ENCODE measurements at regions of chr1 and their contacts with region 1.

Region 1: GRCh38 chr1:39538588-39539465 is 37.8 kb downstream of the PABPC4 start:
- DNase-seq: peak; percentile 27
- ATAC-seq: peak; percentile 100
- H3K4me3 ChIP-seq: no peak overlapping the region
- H3K27ac ChIP-seq: no peak overlapping the region
- H3K4me1 ChIP-seq: peaks cover 10% of the 10 kb centered on the region
- H3K27me3 ChIP-seq: no peaks in the 10 kb centered on the region
- CTCF ChIP-seq: peak; percentile 89 to 91 (median 90)
- EP300 ChIP-seq: no peak
- POLR2A ChIP-seq: no peak
- RAD21 ChIP-seq: peak; percentile 93

Region 2: DNA sequence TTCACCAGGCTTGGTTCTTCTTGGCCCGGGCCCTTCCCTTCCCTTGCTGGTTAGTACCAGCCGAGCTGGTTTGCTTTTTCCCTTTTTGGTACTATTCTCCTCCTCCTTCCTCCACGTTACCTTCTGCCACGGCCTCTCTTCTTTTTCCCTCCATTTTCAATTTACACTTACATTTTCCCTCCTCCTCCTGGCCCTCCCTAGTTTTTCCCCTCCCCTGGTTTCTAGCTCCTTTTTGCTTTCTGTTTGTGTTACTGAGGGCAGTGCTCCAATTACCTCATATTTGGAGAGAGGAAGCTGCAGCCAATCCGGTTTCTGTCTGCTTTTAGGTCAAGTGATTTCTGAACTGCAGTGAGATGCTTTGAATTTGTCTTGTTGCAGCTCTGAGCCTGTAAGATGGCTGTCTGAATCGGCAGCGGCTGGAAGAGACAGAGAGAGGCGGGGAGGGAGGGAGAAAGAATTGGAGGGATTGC is 270.7 kb before region 1 on chr1:
- CTCF ChIA-PET with region 1: interaction called, 16 read pairs
- POLR2A ChIA-PET with region 1: no interaction called
- RAD21 ChIA-PET with region 1: interaction called, 10 read pairs
- SMC1A ChIA-PET with region 1: interaction called, 6 read pairs
- in situ Hi-C with region 1: no loop called
- intact Hi-C with region 1: no loop called
- DNase-seq: no peak
- ATAC-seq: peak; percentile 29
- H3K4me3 ChIP-seq: peak overlapping the region; percentile 57; the same call in 1 of the 2 replicates
- H3K27ac ChIP-seq: peak overlapping the region; percentile 81
- H3K4me1 ChIP-seq: peaks cover 57% of the 10 kb centered on the region
- H3K27me3 ChIP-seq: no peaks in the 10 kb centered on the region
- CTCF ChIP-seq: no peak
- EP300 ChIP-seq: no peak
- POLR2A ChIP-seq: peak; percentile 38; the same call in 1 of the 2 replicates
- RAD21 ChIP-seq: no peak

Region 3: DNA sequence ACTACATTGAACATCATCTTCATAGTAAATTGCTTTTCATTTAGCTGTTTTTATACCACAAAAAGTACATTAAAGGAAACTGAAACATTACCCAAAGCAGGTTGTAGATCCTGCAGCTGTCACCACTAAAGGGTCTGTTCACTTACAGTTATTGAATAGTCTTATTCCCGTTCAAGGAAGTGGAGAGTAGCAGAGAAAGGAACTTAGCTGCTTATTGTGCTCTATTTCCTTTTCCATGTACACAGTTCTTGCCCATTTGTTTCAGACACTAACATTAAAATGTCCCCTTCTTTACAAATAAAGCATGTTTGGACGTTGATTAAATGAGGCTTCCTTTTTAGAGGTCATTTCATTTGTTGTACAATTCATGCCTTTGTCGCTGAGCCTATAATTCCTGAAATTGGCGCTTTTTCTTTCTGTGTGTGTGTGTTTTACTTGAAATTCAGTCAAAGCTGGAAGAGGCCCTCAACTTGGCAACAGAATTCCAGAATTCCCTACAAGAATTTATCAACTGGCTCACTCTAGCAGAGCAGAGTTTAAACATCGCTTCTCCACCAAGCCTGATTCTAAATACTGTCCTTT is 91.8 kb before region 1 on chr1:
- CTCF ChIA-PET with region 1: interaction called, 15 read pairs
- POLR2A ChIA-PET with region 1: no interaction called
- RAD21 ChIA-PET with region 1: interaction called, 4 read pairs
- SMC1A ChIA-PET with region 1: interaction called, 11 read pairs
- in situ Hi-C with region 1: no loop called
- intact Hi-C with region 1: no loop called
- DNase-seq: no peak
- ATAC-seq: no peak
- H3K4me3 ChIP-seq: no peak overlapping the region
- H3K27ac ChIP-seq: no peak overlapping the region
- H3K4me1 ChIP-seq: no peaks in the 10 kb centered on the region
- H3K27me3 ChIP-seq: no peaks in the 10 kb centered on the region
- CTCF ChIP-seq: no peak
- EP300 ChIP-seq: no peak
- POLR2A ChIP-seq: no peak
- RAD21 ChIP-seq: no peak

Region 4: DNA sequence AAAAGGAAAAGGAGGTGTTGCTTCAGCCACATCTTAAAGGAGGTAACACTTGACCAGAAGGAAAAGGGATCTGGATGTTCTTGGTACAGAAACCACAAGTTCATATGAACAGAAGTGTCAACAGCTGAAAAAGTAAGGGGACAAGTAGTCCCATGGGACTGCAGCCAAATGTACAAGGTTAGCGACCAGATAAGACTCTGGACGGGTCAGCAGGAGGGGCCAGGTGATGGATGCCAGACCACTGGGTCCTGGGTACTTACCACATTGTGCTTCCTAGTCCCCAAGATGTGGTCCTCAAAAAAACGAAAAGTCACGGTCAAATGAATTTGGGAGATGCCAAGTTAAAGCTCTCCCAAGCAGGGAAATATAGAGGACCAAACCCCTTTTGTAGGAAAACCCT is 64.0 kb before region 1 on chr1:
- CTCF ChIA-PET with region 1: interaction called, 27 read pairs
- POLR2A ChIA-PET with region 1: no interaction called
- RAD21 ChIA-PET with region 1: interaction called, 3 read pairs
- SMC1A ChIA-PET with region 1: interaction called, 9 read pairs
- in situ Hi-C with region 1: no loop called
- intact Hi-C with region 1: loop called (anchors 5 kb)
- DNase-seq: no peak
- ATAC-seq: no peak
- H3K4me3 ChIP-seq: no peak overlapping the region
- H3K27ac ChIP-seq: no peak overlapping the region
- H3K4me1 ChIP-seq: no peaks in the 10 kb centered on the region
- H3K27me3 ChIP-seq: no peaks in the 10 kb centered on the region
- CTCF ChIP-seq: no peak
- EP300 ChIP-seq: no peak
- POLR2A ChIP-seq: no peak
- RAD21 ChIP-seq: no peak

Region 5: DNA sequence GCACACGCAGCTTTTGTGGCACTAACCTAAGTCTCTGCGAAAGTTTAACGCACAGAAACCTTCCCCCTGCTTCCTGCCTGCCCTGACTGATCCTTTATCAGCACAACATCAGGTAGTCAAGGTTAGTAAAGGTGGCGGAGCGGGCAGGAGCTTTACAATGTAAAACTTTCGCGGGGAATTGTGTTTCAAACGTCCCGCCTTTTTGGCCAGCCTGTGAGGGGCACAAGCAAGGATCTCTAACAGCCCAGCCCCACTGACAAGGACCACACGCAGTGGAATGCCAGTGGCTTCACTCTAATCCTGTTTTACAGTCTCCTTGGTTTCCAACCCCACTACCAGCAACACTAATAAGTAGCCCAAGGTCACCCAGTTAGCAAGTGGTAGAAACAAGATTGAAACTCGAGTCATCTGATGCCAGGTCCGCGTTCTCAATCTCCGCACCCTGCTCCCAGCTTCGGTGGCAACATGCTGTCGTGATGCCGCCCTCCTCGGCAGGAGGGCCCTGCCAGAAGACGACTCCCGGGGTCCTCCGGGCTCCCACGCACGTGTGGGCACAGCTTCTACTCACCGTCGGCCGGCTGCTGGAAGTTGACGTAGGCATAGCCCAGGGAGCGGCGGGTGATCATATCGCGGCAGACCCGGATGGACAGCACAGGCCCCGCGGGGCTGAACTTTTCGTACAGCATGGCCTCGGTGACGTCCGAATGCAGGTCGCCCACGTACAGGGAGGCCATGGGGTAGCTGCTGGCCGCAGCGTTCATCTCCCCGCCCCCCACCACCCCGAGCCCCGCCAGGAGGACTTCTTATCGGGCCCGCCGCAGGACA is 36.6 kb after region 1 on chr1:
- CTCF ChIA-PET with region 1: interaction called, 15 read pairs
- POLR2A ChIA-PET with region 1: no interaction called
- RAD21 ChIA-PET with region 1: interaction called, 6 read pairs
- SMC1A ChIA-PET with region 1: interaction called, 9 read pairs
- in situ Hi-C with region 1: no loop called
- intact Hi-C with region 1: no loop called
- DNase-seq: no peak
- ATAC-seq: peak; percentile 67
- H3K4me3 ChIP-seq: peak overlapping the region; percentile 92
- H3K27ac ChIP-seq: peak overlapping the region; percentile 79
- H3K4me1 ChIP-seq: peaks cover 8% of the 10 kb centered on the region; the same call in 1 of the 2 replicates
- H3K27me3 ChIP-seq: no peaks in the 10 kb centered on the region
- CTCF ChIP-seq: no peak
- EP300 ChIP-seq: no peak
- POLR2A ChIP-seq: peak; percentile 58; the same call in 1 of the 2 replicates
- RAD21 ChIP-seq: no peak

Region 6: DNA sequence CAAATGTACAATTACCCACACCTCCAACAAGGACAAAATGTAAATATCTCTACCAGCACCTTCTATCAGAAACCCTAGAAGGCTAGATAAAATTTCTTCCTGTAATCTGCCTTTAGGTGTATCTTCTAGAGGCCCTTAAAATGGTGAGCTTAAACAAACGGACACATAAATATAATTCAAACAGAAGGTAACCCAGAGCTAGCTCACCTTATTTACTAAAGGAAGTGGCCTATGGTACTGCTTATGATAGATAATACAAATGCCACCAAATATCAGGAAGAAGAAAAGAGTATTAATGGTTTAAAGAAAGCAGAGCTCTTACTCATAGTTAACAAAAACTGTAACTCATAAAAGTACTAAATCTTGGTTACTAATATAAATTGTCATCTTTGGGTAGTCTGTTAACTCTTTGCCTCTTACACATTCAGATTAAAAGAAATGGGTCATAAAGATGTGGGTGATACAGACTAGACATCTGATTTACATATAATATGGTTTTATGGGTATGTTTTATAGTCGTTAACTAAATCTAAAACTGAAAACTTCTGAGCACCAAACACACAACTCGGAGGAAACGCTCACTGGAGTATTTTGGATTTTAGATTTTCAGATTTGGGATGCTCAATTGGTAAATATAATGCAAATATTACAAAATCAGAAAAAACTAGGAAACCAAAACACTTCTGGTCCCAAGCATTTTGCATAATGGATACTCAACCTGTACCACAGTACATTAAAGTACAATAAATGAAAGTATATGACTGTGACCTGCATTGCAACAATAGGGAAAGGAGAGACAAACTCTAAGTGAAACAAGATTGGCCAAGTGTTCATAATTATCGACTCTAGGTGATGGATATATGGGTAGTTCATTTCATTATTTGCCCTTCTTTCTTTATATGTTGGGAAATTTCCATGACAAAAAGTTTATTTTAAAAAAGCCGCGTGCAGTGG is 321.3 kb after region 1 on chr1:
- CTCF ChIA-PET with region 1: no interaction called
- POLR2A ChIA-PET with region 1: no interaction called
- RAD21 ChIA-PET with region 1: no interaction called
- SMC1A ChIA-PET with region 1: no interaction called
- in situ Hi-C with region 1: no loop called
- intact Hi-C with region 1: no loop called
- DNase-seq: no peak
- ATAC-seq: no peak
- H3K4me3 ChIP-seq: no peak overlapping the region
- H3K27ac ChIP-seq: no peak overlapping the region
- H3K4me1 ChIP-seq: no peaks in the 10 kb centered on the region
- H3K27me3 ChIP-seq: no peaks in the 10 kb centered on the region
- CTCF ChIP-seq: no peak
- EP300 ChIP-seq: no peak
- POLR2A ChIP-seq: no peak
- RAD21 ChIP-seq: no peak

Measured in GM12878 (cell line).